K562 (cell line): ENCODE measurements at regions of chr10 and their contacts with region 1.

Region 1: DNA sequence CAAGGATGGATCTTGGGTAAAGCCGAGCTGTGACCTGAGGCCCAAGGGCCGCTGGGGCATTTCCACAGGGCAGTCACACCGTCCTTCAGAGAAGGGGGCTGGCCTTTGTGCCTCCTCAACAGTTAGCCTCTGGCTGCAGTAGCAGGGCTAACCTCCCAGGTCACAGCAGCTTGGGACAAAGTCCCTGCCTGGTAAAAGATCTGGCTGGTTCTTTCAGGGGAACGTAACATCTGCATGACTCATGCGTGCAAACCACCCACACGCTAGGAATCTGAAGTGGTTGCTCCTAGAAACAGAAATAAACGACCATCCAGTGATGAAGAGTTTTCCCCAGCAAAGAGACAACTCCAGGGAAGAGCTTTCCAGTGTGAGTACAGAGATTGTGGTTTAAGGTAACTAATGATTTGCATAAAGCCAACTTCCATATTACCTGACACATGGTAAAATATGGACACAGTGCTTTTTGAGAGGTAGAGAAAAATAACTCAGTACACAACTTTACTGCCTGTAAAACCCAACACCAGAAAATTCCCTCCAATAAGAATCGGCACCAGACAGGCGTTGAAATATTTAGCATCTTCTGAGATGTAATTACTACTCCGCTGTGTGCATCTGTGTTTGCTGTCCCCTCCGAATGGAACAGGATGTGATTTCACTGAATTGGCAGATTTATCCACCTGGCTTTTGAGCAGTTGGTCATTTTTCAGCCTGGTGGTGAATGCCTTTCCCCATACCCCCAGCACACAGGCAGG is 84.9 kb upstream of the ADRB1 start:
- DNase-seq: peak in 1 of 4 experiments; percentile 19
- ATAC-seq: peak; percentile 53
- H3K4me3 ChIP-seq: no peak overlapping the region
- H3K27ac ChIP-seq: no peak overlapping the region
- H3K4me1 ChIP-seq: no peaks in the 10 kb centered on the region; a peak in 2 of 5 replicates
- H3K27me3 ChIP-seq: no peaks in the 10 kb centered on the region
- CTCF ChIP-seq: no peak
- EP300 ChIP-seq: no peak
- POLR2A ChIP-seq: no peak
- RAD21 ChIP-seq: no peak

Region 2: GRCh38 chr10:113882240-113882639 is 76.6 kb before region 1 on chr10:
- CTCF ChIA-PET with region 1: no interaction called
- POLR2A ChIA-PET with region 1: no interaction called
- in situ Hi-C with region 1: no loop called
- intact Hi-C with region 1: no loop called
- DNase-seq: no peak
- ATAC-seq: no peak
- H3K4me3 ChIP-seq: no peak overlapping the region
- H3K27ac ChIP-seq: no peak overlapping the region
- H3K4me1 ChIP-seq: no peaks in the 10 kb centered on the region
- H3K27me3 ChIP-seq: no peaks in the 10 kb centered on the region
- CTCF ChIP-seq: no peak
- EP300 ChIP-seq: no peak
- POLR2A ChIP-seq: no peak
- RAD21 ChIP-seq: no peak

Region 3: DNA sequence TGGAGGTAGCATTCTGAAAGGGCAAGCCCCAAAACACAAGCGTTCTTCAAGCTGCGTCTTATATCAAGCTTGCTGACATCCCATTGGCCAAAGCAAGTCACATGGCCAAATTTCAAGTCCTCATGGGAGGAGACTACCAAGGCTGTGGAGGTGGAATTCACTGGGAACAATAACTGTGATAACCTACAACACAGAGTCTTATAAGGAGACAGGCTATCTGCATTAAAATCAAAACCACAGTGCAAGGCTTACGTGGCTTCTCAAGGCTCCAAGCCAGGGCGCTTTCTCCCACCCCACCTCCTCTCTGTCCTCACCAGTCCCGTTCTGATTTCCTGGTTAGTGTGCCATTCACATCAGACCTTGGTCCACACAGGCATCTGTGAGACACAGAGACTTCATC is 124.2 kb after region 1 on chr10:
- CTCF ChIA-PET with region 1: no interaction called
- POLR2A ChIA-PET with region 1: no interaction called
- in situ Hi-C with region 1: loop called (anchors 5 kb)
- intact Hi-C with region 1: no loop called
- DNase-seq: peak in 1 of 4 experiments; percentile 6
- ATAC-seq: peak; percentile 64
- H3K4me3 ChIP-seq: no peak overlapping the region
- H3K27ac ChIP-seq: no peak overlapping the region
- H3K4me1 ChIP-seq: peaks cover 0 to 4% of the 10 kb centered on the region in 2 experiments; a peak in 2 of 5 replicates
- H3K27me3 ChIP-seq: peaks cover 0 to under 1% of the 10 kb centered on the region in 2 experiments; a peak in 1 of 5 replicates
- CTCF ChIP-seq: no peak
- EP300 ChIP-seq: no peak
- POLR2A ChIP-seq: no peak
- RAD21 ChIP-seq: no peak

Region 4: DNA sequence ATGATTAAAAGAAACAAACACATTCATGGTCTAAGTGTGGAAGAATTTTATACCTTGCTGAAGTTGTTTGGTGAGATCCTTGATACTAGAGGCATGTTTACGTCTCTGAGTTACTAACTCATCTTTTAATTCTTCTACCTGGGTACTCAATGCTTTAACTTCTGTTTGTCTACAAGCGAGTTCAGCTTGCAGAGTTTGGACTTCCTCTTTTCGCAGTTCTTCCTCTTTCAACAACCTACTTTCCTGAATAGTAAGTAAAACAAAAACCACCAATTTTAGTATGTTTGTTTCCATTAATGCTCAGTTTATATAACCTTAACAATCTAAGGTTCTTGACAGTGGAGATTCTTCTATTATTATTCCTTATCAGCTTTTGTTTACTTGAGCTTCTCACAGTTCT is 172.3 kb after region 1 on chr10:
- CTCF ChIA-PET with region 1: no interaction called
- POLR2A ChIA-PET with region 1: no interaction called
- in situ Hi-C with region 1: no loop called
- intact Hi-C with region 1: no loop called
- DNase-seq: no peak
- ATAC-seq: no peak
- H3K4me3 ChIP-seq: no peak overlapping the region
- H3K27ac ChIP-seq: no peak overlapping the region
- H3K4me1 ChIP-seq: no peaks in the 10 kb centered on the region
- H3K27me3 ChIP-seq: no peaks in the 10 kb centered on the region
- CTCF ChIP-seq: no peak
- EP300 ChIP-seq: no peak
- POLR2A ChIP-seq: no peak
- RAD21 ChIP-seq: no peak